A549 (cell line): ENCODE measurements at regions of chr12 and their contacts with region 1.

Region 1: GRCh38 chr12:57280211-57281062 is 29.4 kb upstream of the STAC3 start:
- DNase-seq: peak; percentile 78 to 89
- ATAC-seq: peak; percentile 95 to 98
- H3K4me3 ChIP-seq: no peak overlapping the region
- H3K27ac ChIP-seq: peak overlapping the region; percentile 73 to 90
- H3K4me1 ChIP-seq: peaks cover 32% of the 10 kb centered on the region
- CTCF ChIP-seq: no peak
- EP300 ChIP-seq: peak in 1 of 2 experiments; percentile 45; a peak in 2 of 5 replicates
- POLR2A ChIP-seq: peak; percentile 34
- RAD21 ChIP-seq: no peak

Region 2: DNA sequence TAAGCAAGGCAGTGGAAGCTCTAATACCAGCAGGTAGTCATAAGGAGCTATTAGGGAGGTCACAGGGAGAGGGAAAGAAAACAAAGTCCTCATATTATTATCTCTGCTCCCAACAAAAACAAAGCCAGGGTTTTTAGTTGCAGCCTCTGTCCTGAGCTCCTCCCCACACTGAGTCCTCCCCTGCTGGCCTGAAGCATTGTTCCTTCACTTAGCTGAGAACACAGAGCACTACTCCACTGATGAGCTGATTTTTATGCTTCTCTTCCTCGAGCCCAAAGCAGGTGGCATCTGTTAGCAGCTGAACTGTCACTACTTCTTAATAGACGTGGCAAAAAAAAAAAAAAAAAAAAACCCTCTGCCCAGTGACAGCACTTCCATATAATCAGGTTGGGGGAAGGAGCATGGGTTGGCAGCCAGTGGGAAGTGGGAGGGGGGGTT is 19.0 kb before region 1 on chr12:
- CTCF ChIA-PET with region 1: interaction called, 13 read pairs
- POLR2A ChIA-PET with region 1: no interaction called
- DNase-seq: no peak
- ATAC-seq: no peak
- H3K4me3 ChIP-seq: no peak overlapping the region
- H3K27ac ChIP-seq: no peak overlapping the region
- H3K4me1 ChIP-seq: 0 out of 3 replicates have a peak, but pooled peaks cover 3% of the 10 kb centered on the region
- CTCF ChIP-seq: no peak
- EP300 ChIP-seq: no peak
- POLR2A ChIP-seq: no peak
- RAD21 ChIP-seq: no peak